AG04449 (cell line): ENCODE measurements at regions of chr10 and their contacts with region 1.

Region 1: GRCh38 chr10:100009793-100010676 is at the start of gene DNMBP:
- DNase-seq: no peak
- H3K4me3 ChIP-seq: peak within 1 kb of the TSS; percentile 85
- CTCF ChIP-seq: peak; percentile 43

Region 2: DNA sequence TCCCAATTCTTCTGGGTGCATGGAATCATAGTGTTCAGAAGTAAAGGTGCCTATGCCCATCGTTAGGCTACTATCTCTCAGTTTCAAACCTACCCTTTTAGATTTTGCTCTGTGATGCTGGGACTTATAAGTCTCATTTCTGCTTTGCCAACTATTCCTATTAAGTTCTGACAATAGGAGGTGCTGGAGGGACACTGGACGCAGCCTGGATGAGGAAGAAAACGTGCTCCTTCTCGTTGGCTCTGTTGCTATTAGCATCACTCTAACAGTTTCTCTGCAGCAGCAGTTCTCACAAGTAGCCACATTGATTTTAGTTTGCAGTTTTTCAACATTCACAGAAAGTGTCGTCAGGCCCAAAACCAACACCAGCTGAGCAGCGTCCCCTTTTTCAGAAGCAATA is 155.2 kb before region 1 on chr10:
- CTCF ChIA-PET with region 1: interaction called, 16 read pairs
- POLR2A ChIA-PET with region 1: no interaction called
- DNase-seq: peak; percentile 36
- H3K4me3 ChIP-seq: no peak overlapping the region
- CTCF ChIP-seq: peak; percentile 69

Region 3: DNA sequence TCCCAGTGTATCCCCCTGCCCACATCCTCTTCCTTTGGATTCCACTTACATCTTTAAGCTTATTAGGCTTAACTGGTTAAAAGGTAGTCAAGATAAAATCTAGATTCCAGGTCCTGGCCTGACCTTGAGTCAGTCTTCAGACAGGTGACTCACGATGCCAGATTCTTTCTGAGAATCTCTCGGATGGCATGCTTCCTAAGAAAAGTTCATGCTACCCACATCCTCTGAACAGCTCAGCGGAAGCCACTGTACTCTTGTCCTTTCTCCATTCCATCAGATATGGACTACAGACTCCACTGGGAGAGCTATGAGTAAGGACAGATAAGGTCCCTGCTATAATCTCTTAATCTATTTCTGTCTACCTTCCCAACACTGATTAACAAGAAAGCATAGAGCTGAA is 43.7 kb before region 1 on chr10:
- CTCF ChIA-PET with region 1: interaction called, 21 read pairs
- POLR2A ChIA-PET with region 1: interaction called, 20 read pairs
- DNase-seq: peak; percentile 74
- H3K4me3 ChIP-seq: no peak overlapping the region
- CTCF ChIP-seq: no peak

Region 4: GRCh38 chr10:99983280-99983988 is 26.6 kb before region 1 on chr10:
- CTCF ChIA-PET with region 1: interaction called, 72 read pairs
- POLR2A ChIA-PET with region 1: no interaction called
- DNase-seq: no peak
- H3K4me3 ChIP-seq: peak overlapping the region; percentile 37
- CTCF ChIP-seq: no peak

Region 5: DNA sequence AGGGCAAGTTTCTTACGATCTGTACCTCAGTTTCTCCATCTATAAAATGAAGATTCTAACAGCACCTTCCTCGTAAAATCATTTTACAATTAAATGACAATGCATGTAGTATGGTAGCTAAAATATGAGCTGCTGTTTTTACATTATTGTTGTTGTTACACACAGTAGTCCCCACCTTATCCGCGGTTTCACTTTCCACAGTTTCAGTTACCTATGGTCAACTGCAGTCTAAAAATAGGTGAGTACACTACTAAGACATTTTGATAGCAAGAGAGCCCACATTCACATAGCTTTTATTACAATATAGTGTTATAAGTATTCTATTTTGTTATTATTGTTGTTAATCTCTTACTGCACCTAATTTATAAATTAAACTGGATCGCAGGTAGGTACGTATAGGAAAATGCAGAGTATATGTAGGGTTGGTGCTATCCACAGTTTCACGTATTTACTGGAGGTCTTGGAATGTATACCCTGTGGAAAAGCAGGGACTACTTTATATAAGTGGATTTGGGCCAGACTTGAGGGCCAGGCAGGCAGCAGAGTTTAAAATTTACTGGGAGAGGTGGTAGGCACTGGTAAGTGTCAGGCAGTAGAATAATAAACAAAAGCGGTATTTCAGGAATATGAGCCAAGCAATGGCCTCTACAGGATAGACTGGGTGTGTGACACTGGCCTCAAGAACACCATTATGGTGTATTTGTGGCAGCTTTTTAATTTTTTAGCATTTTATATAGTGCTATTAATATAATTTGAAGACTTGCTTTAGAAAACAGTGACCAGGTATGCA is 10.5 kb before region 1 on chr10:
- CTCF ChIA-PET with region 1: interaction called, 42 read pairs
- POLR2A ChIA-PET with region 1: interaction called, 3 read pairs
- DNase-seq: no peak
- H3K4me3 ChIP-seq: no peak overlapping the region
- CTCF ChIP-seq: no peak